A673 (cell line): ENCODE measurements at regions of chr4 and their contacts with region 1.

Region 1: DNA sequence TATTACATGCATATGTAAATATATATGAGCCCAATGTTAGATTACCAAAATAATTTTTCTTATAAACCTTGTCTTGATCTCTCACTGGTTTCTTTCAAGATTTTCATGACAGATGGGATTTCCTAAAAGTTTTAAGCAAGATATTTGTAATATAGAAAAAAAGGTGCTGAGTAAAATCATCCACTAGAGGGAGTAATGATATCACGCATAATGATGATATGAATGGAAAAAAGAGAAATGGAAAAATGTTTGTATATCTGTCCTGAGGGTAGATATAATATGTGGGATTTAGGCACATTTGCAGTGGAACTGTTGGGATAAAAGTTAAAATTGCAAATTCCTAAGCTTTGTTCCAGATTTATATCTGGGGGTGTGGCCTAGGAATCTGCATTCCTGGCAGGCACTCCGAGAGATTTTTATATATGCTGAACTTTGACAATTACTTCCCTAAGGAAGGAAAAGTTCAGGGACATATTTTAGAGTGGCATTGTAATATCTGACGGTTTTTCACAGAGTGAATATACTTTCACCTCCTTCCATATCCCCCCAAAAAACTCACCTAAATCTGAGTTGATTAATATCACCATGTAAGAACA is 60.5 kb downstream of the TMA16 start:
- DNase-seq: peak; percentile 65
- H3K4me3 ChIP-seq: no peak overlapping the region
- H3K27ac ChIP-seq: no peak overlapping the region
- H3K4me1 ChIP-seq: peaks cover 15% of the 10 kb centered on the region
- H3K27me3 ChIP-seq: no peaks in the 10 kb centered on the region
- CTCF ChIP-seq: peak; percentile 82

Region 2: DNA sequence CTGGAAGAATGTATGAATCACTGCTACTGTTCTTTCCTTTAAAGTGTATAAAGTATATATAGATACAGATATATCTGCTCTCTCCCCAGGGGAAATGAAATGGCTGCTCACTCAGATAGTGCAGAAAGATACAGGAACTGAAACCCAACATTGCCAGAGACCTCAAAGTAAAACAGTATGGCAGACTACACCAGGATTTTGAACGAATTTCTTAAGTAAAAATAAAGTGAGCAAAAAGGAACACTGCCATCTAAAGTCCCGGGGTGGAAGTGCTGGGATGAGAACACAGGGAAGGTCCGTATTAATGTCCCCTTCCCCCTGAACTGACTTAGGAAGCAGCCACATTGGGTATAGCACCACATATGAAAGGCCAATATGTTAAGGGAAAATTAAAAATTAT is 32.9 kb after region 1 on chr4:
- CTCF ChIA-PET with region 1: no interaction called
- POLR2A ChIA-PET with region 1: no interaction called
- intact Hi-C with region 1: no loop called
- DNase-seq: peak; percentile 18
- H3K4me3 ChIP-seq: no peak overlapping the region
- H3K27ac ChIP-seq: no peak overlapping the region
- H3K4me1 ChIP-seq: peaks cover 11% of the 10 kb centered on the region
- H3K27me3 ChIP-seq: no peaks in the 10 kb centered on the region
- CTCF ChIP-seq: peak; percentile 36; the same call in 1 of the 2 replicates

Region 3: DNA sequence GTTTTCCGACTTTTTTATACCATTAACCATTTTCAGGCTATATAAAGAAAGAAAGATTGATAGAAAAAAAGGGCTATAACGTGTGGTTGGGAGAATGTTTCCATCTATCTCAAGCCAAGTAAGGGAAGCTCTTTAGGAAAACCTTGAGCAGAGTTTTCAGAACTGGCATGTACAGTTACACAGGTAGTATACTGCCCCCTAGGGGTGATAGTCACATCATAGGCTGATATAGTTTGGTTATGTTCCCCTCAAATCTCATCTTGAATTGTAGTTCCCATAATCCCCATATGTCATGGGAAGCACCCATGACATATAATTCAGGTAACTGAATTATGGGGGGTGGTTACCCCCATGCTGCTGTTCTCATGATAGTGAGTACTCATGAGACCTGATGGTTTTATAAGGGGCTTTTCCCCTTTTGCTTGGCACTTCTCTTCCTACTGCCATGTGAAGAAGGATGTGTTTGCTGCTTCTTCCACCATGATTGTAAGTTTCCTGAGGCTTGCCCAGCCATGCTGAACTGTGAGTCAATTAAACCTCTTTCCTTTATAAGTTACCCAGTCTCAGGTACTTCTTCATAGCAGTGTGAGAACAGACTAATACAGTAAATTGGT is 126.3 kb after region 1 on chr4:
- CTCF ChIA-PET with region 1: interaction called, 5 read pairs
- POLR2A ChIA-PET with region 1: no interaction called
- intact Hi-C with region 1: loop called (anchors 5 kb)
- DNase-seq: peak; percentile 70
- H3K4me3 ChIP-seq: no peak overlapping the region
- H3K27ac ChIP-seq: no peak overlapping the region
- H3K4me1 ChIP-seq: no peaks in the 10 kb centered on the region
- H3K27me3 ChIP-seq: no peaks in the 10 kb centered on the region
- CTCF ChIP-seq: peak; percentile 69

Region 4: GRCh38 chr4:163815776-163816175 is 260.8 kb after region 1 on chr4:
- CTCF ChIA-PET with region 1: interaction called, 3 read pairs
- POLR2A ChIA-PET with region 1: no interaction called
- intact Hi-C with region 1: loop called (anchors 5 kb)
- DNase-seq: peak; percentile 12
- H3K4me3 ChIP-seq: no peak overlapping the region
- H3K27ac ChIP-seq: no peak overlapping the region
- H3K4me1 ChIP-seq: peaks cover 3% of the 10 kb centered on the region
- H3K27me3 ChIP-seq: no peaks in the 10 kb centered on the region
- CTCF ChIP-seq: no peak

Region 5: DNA sequence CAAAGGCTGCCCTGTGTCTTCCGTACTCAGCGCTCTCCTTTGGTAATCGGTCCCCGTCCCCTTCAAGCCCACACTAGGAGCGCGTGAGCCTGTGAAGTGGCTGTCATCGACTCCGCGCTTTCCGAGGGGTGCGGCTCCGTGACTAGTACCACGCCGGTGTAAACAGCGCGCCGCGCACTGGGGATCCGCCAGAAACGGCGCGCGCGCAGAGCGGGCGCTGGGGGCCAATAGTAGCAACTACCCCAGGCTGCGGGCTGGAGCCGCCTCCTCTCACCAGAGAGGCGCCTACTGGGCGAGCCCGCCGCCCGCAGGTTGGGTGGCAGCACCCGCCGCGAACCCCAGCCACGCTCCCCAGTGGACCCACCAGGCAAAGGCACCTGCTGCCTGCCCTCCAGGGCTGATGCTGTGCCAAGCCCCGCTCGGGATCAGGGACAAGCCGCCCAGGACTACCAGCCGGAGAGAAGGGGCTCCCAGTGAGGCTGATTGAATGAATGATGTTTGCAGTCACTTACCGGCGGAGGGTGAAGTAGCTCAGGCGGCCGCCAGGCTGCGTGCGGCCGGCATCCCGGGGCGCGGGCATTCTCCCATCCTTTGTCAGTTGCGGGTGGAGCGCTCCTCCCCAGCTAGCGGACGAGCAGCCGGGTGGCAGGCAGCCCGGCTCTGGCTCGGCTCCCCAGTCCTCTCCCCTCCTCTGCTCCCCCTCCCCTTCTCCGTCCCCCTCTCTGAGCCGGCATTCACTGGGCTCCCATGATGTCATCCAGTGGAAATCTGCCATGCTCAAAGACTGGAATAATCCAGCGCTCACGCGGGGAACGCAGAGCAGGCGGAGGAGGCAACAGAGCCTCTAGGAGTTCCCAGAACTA is 828.6 kb after region 1 on chr4:
- CTCF ChIA-PET with region 1: no interaction called
- POLR2A ChIA-PET with region 1: no interaction called
- intact Hi-C with region 1: loop called (anchors 10 kb)
- DNase-seq: peak; percentile 89
- H3K4me3 ChIP-seq: peak overlapping the region; percentile 75
- H3K27ac ChIP-seq: peak overlapping the region; percentile 59
- H3K4me1 ChIP-seq: peaks cover 4% of the 10 kb centered on the region
- H3K27me3 ChIP-seq: no peaks in the 10 kb centered on the region
- CTCF ChIP-seq: peak; percentile 55

Region 6: GRCh38 chr4:164748375-164748774 is 1193.4 kb after region 1 on chr4:
- CTCF ChIA-PET with region 1: interaction called, 5 read pairs
- POLR2A ChIA-PET with region 1: no interaction called
- intact Hi-C with region 1: loop called (anchors 1 kb)
- DNase-seq: peak; percentile 64
- H3K4me3 ChIP-seq: no peak overlapping the region
- H3K27ac ChIP-seq: no peak overlapping the region
- H3K4me1 ChIP-seq: peaks cover 18% of the 10 kb centered on the region
- H3K27me3 ChIP-seq: no peaks in the 10 kb centered on the region
- CTCF ChIP-seq: peak; percentile 61